Breast epithelium (tissue), 4 donors: ENCODE measurements at regions of chr11 and their contacts with region 1.

Region 1: DNA sequence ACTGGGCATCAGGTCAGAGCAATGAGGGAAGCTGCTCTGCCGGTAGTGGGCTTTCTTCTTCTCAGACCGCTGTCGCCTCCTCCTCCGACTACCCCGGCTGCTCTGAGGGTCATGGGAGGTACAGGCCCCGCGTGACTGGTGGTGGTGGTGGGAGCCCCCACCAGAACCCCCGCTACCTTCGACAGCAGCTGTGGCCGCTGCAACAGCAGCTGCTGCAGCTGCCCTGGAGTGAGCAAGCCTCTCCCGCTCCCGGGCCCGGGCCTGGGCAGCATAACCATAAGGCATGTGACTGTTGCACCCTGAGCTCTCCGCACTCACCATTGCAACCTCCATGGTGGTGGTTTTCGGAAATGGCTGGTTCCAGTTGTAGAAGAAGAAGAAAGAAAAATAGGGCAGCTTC is 4.5 kb downstream of the KCNA4 start:
- DNase-seq: no peak
- H3K4me3 ChIP-seq: no peak overlapping the region
- H3K27ac ChIP-seq: no peak overlapping the region
- H3K4me1 ChIP-seq: no peaks in the 10 kb centered on the region
- H3K27me3 ChIP-seq: peaks cover 0 to 34% of the 10 kb centered on the region in 2 donors
- CTCF ChIP-seq: no peak
- POLR2A ChIP-seq: no peak

Region 2: GRCh38 chr11:31383116-31383515 is 1370.8 kb after region 1 on chr11:
- intact Hi-C with region 1: loop called (anchors 5 kb)
- DNase-seq: no peak
- H3K4me3 ChIP-seq: no peak overlapping the region
- H3K27ac ChIP-seq: no peak overlapping the region
- H3K4me1 ChIP-seq: no peaks in the 10 kb centered on the region
- H3K27me3 ChIP-seq: no peaks in the 10 kb centered on the region
- CTCF ChIP-seq: no peak
- POLR2A ChIP-seq: no peak